ENCODE measurements at regions of chr3 and their contacts with region 1.

Region 1: DNA sequence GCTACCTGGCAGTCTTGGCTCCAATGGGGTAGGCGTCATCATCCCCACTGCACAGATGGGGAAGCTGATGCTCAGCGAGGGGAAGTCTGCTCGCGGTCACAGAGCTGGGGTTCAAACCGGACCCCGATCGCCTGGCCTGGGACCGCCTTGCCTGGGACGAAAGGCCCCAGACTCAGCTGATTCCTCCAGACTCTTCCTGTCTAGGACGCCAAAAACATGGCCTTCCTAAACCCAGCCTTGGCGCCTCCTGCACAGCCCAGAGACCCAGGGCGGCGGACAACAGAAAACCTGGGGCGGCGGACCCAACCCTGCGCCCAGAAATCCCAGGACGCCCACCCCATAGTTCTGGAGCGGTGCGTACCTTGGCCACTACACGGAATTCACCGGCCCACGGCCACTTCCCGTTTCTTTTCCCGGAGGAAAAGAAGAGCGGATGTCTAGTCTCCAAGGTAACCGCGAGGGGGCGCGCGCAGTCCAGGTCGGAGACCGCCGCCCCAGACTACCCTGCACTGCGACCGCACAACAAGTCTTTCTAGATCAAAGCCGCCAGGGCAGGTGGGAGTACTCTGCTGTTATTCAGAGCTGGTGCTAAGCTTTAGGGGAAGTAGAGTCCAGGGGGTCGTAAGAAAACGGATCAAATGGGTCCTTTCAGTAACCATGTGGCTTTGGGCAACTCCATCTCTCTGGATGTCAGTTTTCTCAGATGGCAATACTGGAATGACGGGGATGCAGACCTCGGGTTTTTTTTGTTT is 4.9 kb upstream of the IL17RD start:
- DNase-seq: peak; percentile 73 to 77
- H3K4me3 ChIP-seq: peak overlapping the region; percentile 22 to 40
- H3K27ac ChIP-seq: no peak overlapping the region
- H3K4me1 ChIP-seq: no peaks in the 10 kb centered on the region
- H3K27me3 ChIP-seq: no peaks in the 10 kb centered on the region
- CTCF ChIP-seq: peak; percentile 83 to 90 (median 88)
- POLR2A ChIP-seq: no peak

Region 2: GRCh38 chr3:57007513-57008460 is 162.3 kb before region 1 on chr3:
- intact Hi-C with region 1: no loop called
- DNase-seq: peak; percentile 77 to 83
- H3K4me3 ChIP-seq: no peak overlapping the region
- H3K27ac ChIP-seq: peak overlapping the region; percentile 79
- H3K4me1 ChIP-seq: peaks cover 0 to 8% of the 10 kb centered on the region in 2 donors
- H3K27me3 ChIP-seq: no peaks in the 10 kb centered on the region
- CTCF ChIP-seq: no peak
- POLR2A ChIP-seq: no peak

Region 3: DNA sequence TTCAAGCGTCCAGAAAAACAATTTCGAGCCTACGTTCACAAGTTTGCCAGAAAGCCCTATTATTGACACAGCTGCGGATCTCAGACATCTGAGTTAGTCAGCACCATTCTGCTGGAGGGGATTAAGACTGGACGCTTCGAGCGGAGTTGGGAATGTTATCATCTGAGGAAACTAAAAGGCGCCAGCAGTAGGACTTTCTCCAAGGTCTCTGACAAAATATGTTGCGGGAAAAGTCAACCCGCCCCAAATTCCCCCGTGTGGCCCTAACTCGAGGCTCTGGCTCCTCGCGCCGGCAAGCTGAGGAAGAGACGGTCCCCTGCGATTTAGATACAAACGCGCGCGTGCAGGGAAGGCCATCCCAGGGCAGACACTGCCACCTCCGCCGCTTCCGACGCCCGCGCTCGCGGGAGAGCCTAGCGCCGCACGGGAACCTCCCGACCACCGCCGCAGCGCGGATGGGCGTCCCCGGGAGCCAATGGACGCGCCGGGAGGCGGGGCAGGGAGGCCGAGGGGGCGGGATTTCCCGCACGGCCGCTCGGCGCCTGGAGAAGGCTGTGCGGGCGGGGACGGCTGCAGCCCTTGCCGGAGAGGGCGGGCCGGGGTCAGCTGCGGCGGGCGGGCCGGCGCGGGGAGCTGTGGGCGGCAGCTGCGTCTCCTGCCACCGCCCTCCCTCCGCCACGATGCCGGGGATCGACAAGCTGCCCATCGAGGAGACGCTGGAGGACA is 57.3 kb after region 1 on chr3 and contains the start of gene APPL1:
- intact Hi-C with region 1: loop called (anchors 10 kb)
- DNase-seq: peak; percentile 88 to 95
- H3K4me3 ChIP-seq: peak within 1 kb of the TSS; percentile 62 to 94
- H3K27ac ChIP-seq: peak within 1 kb of the TSS; percentile 87 to 95
- H3K4me1 ChIP-seq: peaks cover 0 to 10% of the 10 kb centered on the region in 2 donors
- H3K27me3 ChIP-seq: no peaks in the 10 kb centered on the region
- CTCF ChIP-seq: no peak
- POLR2A ChIP-seq: peak; percentile 81 to 91
- total RNA-seq, gene APPL1: 25.4 to 114 (median 51.7) TPM

Region 4: DNA sequence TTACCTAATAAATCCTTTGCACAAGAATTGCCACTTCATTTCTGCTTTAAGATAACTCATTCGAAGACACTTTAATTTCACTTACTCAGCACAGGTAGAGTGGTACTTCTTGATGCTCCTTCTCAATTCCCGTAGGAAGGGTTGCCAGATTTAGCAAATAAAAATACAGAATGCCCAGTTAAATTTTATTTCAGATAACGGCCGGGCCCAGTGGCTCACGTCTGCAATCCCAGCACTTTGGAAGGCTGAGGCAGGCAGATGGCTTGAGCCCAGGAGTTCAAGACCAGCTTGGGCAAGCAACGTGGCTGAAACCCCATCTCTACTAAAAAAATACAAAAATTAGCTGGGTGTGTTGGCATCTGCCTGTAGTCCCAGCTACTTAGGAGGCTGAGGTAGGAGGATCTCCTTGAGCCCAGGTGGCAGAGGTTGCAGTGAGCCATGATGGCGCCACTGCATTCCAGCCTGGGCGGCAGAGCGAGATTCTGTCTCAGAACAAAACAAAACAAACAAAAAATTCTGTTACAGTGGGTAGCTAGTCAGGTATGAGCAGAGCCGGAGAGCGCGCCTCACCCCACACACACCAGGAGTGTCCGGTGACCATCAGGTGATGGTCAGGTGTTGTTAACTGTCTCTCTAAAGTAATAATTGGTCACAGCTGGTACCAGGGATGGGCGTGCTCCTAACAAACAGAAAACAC is 281.2 kb after region 1 on chr3:
- intact Hi-C with region 1: no loop called
- DNase-seq: no peak
- H3K4me3 ChIP-seq: no peak overlapping the region
- H3K27ac ChIP-seq: no peak overlapping the region
- H3K4me1 ChIP-seq: no peaks in the 10 kb centered on the region
- H3K27me3 ChIP-seq: no peaks in the 10 kb centered on the region
- CTCF ChIP-seq: no peak
- POLR2A ChIP-seq: no peak

Measured in uterus (tissue), 4 donors.